ENCODE measurements at regions of chr18 and their contacts with region 1.

Region 1: GRCh38 chr18:62425465-62426195 is 97.2 kb upstream of the ZCCHC2 start:
- DNase-seq: peak; percentile 75
- ATAC-seq: peak; percentile 50
- H3K4me3 Mint-ChIP-seq: no peak overlapping the region
- H3K27ac Mint-ChIP-seq: peak overlapping the region; percentile 81
- H3K4me1 Mint-ChIP-seq: peaks cover 31% of the 10 kb centered on the region
- H3K27me3 Mint-ChIP-seq: peaks cover 4% of the 10 kb centered on the region

Region 2: GRCh38 chr18:62324917-62325805 is 100.5 kb before region 1 on chr18 and contains the start of gene TNFRSF11A:
- CTCF ChIA-PET with region 1: interaction called, 6 read pairs
- POLR2A ChIA-PET with region 1: no interaction called
- intact Hi-C with region 1: loop called (anchors 1 kb)
- DNase-seq: peak; percentile 85
- ATAC-seq: peak; percentile 77
- H3K4me3 Mint-ChIP-seq: peak within 1 kb of the TSS; percentile 78
- H3K27ac Mint-ChIP-seq: peak within 1 kb of the TSS; percentile 64
- H3K4me1 Mint-ChIP-seq: peaks cover 29% of the 10 kb centered on the region
- H3K27me3 Mint-ChIP-seq: peaks cover 70% of the 10 kb centered on the region
- total RNA-seq, gene TNFRSF11A: 6.9 to 9.3 TPM

Region 3: GRCh38 chr18:62437235-62438017 is 11.8 kb after region 1 on chr18:
- CTCF ChIA-PET with region 1: interaction called, 17 read pairs
- POLR2A ChIA-PET with region 1: no interaction called
- intact Hi-C with region 1: no loop called
- DNase-seq: no peak
- ATAC-seq: peak; percentile 47
- H3K4me3 Mint-ChIP-seq: no peak overlapping the region
- H3K27ac Mint-ChIP-seq: no peak overlapping the region
- H3K4me1 Mint-ChIP-seq: no peaks in the 10 kb centered on the region
- H3K27me3 Mint-ChIP-seq: peaks cover 7% of the 10 kb centered on the region

Region 4: GRCh38 chr18:62566199-62566598 is 140.6 kb after region 1 on chr18:
- CTCF ChIA-PET with region 1: interaction called, 6 read pairs
- POLR2A ChIA-PET with region 1: no interaction called
- intact Hi-C with region 1: loop called in 1 of 2 experiments (anchors 5 kb)
- DNase-seq: peak; percentile 24
- ATAC-seq: no peak
- H3K4me3 Mint-ChIP-seq: no peak overlapping the region
- H3K27ac Mint-ChIP-seq: no peak overlapping the region
- H3K4me1 Mint-ChIP-seq: peaks cover 2% of the 10 kb centered on the region
- H3K27me3 Mint-ChIP-seq: no peaks in the 10 kb centered on the region

Region 5: GRCh38 chr18:62844850-62845643 is 419.4 kb after region 1 on chr18:
- CTCF ChIA-PET with region 1: no interaction called
- POLR2A ChIA-PET with region 1: no interaction called
- intact Hi-C with region 1: loop called in 1 of 2 experiments (anchors 1 kb)
- DNase-seq: peak; percentile 63
- ATAC-seq: peak; percentile 90
- H3K4me3 Mint-ChIP-seq: peak overlapping the region; percentile 15
- H3K27ac Mint-ChIP-seq: peak overlapping the region; percentile 91
- H3K4me1 Mint-ChIP-seq: peaks cover 40% of the 10 kb centered on the region
- H3K27me3 Mint-ChIP-seq: no peaks in the 10 kb centered on the region